WTC11 (cell line): ENCODE measurements at regions of chr19 and their contacts with region 1.

Region 1: DNA sequence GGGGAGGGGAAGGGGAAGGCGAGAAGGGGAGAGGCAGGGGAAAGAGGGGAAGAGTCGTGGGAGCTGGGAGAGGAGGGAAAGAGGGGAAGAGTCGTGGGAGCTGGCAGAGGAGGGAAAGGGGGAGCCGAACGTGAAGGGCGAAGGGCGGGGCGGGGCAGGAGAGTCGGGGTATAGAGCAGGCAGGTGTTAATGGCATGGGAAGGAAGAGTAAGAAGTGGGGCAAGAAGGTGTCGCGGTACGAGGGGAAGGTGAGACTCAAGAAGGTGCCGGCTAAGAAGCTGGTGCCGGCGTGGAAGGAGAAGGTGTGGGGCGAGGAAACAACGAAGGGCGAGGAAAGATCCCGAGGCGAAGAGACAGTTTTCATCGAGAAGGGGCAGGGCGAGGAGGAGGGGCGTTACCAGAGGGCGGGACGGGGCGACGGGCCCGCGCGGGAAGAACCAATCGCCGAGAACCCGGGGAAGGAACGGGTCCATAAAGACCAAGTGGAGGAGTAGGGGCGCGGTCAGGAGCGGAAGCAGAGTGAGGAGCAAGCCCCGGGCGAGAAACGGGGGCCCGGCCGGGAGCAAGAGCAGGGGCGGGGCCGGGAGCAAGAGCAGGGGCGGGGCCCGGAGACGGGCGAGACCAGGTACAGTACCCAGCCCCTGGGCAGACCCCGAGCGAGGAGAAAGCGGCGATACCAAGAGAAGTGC is 463 bp downstream of the CATSPERG start:
- DNase-seq: peak; percentile 93
- ATAC-seq: peak; percentile 71
- H3K4me3 Mint-ChIP-seq: peak overlapping the region; percentile 100
- H3K27ac Mint-ChIP-seq: peak overlapping the region; percentile 100
- H3K4me1 Mint-ChIP-seq: peaks cover 11% of the 10 kb centered on the region
- H3K27me3 Mint-ChIP-seq: peaks cover 3% of the 10 kb centered on the region; the same call in 1 of the 2 replicates
- CTCF ChIP-seq: no peak

Region 2: DNA sequence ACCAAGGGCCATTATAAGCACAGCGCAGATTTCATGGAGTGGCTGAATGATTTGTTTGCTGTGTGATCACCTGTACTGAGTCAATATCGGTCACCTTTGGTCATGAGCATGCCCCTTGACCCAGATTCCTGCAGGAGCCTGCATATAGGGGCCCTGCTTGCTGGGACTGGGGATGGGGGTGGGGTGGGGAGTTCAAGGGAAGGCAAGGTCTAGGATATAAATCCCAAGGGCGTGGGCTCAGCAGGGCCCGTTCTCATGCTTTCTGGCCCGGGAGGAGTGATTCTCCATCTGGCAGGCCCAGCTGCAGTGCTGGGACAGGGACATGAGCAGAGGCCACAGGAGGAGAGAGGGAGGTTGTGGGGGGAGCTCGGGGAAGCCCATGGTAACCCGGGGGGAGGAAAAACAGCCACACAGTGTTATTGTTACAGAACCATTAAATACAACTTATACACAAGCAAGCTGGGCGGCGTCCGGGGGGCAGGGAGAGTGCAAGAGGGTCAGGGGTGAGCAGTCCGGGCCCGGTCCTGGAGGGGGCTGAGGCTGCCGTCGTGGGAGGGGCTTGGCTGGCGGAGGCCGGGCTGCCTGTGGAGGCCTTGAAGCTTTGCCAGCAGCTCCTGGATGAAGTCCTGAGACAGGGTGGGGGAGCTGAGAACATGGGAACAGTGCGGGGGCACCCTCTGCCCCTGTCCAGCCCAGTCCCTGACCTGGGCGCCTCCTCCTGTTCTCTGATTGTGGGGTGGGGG is 85.1 kb before region 1 on chr19:
- CTCF ChIA-PET with region 1: interaction called, 14 read pairs
- POLR2A ChIA-PET with region 1: interaction called, 6 read pairs
- DNase-seq: peak; percentile 38
- ATAC-seq: peak; percentile 45
- H3K4me3 Mint-ChIP-seq: peak overlapping the region; percentile 63
- H3K27ac Mint-ChIP-seq: peak overlapping the region; percentile 75
- H3K4me1 Mint-ChIP-seq: peaks cover 46% of the 10 kb centered on the region
- H3K27me3 Mint-ChIP-seq: peaks cover 8% of the 10 kb centered on the region
- CTCF ChIP-seq: no peak

Region 3: GRCh38 chr19:38277969-38278680 is 58.0 kb before region 1 on chr19:
- CTCF ChIA-PET with region 1: no interaction called
- POLR2A ChIA-PET with region 1: no interaction called
- DNase-seq: no peak
- ATAC-seq: no peak
- H3K4me3 Mint-ChIP-seq: no peak overlapping the region
- H3K27ac Mint-ChIP-seq: peak overlapping the region; percentile 49; the same call in 1 of the 2 replicates
- H3K4me1 Mint-ChIP-seq: peaks cover 10% of the 10 kb centered on the region; the same call in 1 of the 2 replicates
- H3K27me3 Mint-ChIP-seq: no peaks in the 10 kb centered on the region
- CTCF ChIP-seq: no peak

Region 4: DNA sequence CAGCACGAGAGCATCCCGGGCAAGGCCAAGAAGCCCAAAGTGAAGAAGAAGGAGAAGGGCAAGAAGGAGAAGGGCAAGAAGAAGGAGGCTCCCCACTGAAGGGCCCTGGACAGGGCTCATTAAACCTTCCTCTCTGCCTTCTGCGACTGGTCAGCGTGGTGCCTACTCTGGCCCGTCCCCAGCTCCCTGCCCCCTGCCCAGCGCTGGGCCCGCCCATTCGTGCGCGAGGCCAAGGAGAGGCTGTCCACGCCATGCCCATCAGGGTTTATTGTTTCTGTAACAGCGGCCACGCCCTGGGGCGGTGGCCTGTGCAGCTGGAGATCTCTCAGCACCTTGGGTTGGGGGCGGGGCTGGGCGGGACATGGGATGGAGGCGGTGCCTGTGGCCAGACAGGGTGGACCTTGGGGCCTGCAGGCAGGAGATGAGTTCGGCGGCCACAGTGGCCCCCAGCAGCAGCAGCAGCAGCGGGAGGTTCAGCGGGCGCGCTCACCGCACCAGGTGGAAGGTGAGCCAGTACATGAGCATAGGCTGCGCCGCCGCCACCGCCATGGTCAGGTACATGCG is 31.1 kb before region 1 on chr19:
- CTCF ChIA-PET with region 1: interaction called, 11 read pairs
- POLR2A ChIA-PET with region 1: interaction called, 3 read pairs
- DNase-seq: peak; percentile 90
- ATAC-seq: peak; percentile 86
- H3K4me3 Mint-ChIP-seq: peak overlapping the region; percentile 74
- H3K27ac Mint-ChIP-seq: peak overlapping the region; percentile 88
- H3K4me1 Mint-ChIP-seq: peaks cover 16% of the 10 kb centered on the region
- H3K27me3 Mint-ChIP-seq: peaks cover 4% of the 10 kb centered on the region
- CTCF ChIP-seq: no peak

Region 5: DNA sequence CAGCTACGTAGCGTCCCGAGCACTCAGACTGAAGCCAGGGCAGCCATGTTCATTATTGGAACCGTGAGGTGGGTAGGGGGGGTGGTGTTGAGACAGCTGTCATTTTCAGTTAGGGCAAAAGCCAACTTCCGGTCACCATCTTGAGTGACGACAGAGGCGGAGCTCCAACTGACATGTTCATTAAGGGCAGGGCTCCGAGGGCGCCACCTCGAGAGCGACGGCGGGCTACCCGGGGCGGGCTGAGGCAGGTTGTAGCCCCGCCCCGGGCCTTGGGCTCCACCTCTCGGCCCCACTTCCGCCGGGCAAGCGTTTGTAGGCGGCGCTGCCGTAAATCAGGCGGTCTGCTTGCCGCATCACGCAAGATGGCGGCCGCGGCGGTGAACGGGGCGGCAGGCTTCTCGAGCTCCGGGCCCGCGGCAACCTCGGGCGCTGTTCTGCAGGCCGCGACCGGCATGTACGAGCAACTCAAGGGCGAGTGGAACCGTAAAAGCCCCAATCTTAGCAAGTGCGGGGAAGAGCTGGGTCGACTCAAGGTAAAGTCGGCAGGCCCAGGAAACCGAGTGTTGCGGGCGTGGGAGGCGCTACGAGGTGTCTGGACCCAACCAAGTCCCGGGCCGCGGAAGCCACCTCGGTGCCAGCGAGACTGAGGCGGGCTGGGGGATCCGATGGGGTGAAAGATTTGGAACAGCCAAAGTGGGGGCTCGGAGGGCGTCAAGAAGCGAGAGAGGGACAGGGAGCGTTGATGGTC is 38.5 kb after region 1 on chr19 and contains the start of gene PSMD8:
- CTCF ChIA-PET with region 1: interaction called, 24 read pairs
- POLR2A ChIA-PET with region 1: no interaction called
- DNase-seq: peak; percentile 99
- ATAC-seq: peak; percentile 99
- H3K4me3 Mint-ChIP-seq: peak within 1 kb of the TSS; percentile 100
- H3K27ac Mint-ChIP-seq: peak within 1 kb of the TSS; percentile 75
- H3K4me1 Mint-ChIP-seq: peaks cover 14% of the 10 kb centered on the region
- H3K27me3 Mint-ChIP-seq: peaks cover 25% of the 10 kb centered on the region
- CTCF ChIP-seq: no peak
- total RNA-seq, gene PSMD8: 156 to 167 TPM (median 160 TPM) in 3 replicates

Region 6: GRCh38 chr19:38387550-38388348 is 51.7 kb after region 1 on chr19 and contains the start of gene GGN:
- CTCF ChIA-PET with region 1: interaction called, 11 read pairs
- POLR2A ChIA-PET with region 1: interaction called, 3 read pairs
- DNase-seq: peak; percentile 98
- ATAC-seq: peak; percentile 77
- H3K4me3 Mint-ChIP-seq: peak within 1 kb of the TSS; percentile 85
- H3K27ac Mint-ChIP-seq: peak within 1 kb of the TSS; percentile 97
- H3K4me1 Mint-ChIP-seq: peaks cover 28% of the 10 kb centered on the region
- H3K27me3 Mint-ChIP-seq: peaks cover 3% of the 10 kb centered on the region; the same call in 1 of the 2 replicates
- CTCF ChIP-seq: no peak
- total RNA-seq, gene GGN: 2.4 to 3.1 TPM (median 2.7 TPM) in 3 replicates

Region 7: GRCh38 chr19:38569368-38569983 is 233.4 kb after region 1 on chr19:
- CTCF ChIA-PET with region 1: no interaction called
- POLR2A ChIA-PET with region 1: no interaction called
- DNase-seq: no peak
- ATAC-seq: no peak
- H3K4me3 Mint-ChIP-seq: no peak overlapping the region
- H3K27ac Mint-ChIP-seq: no peak overlapping the region
- H3K4me1 Mint-ChIP-seq: no peaks in the 10 kb centered on the region
- H3K27me3 Mint-ChIP-seq: no peaks in the 10 kb centered on the region; the same call in 1 of the 2 replicates
- CTCF ChIP-seq: no peak

Region 8: DNA sequence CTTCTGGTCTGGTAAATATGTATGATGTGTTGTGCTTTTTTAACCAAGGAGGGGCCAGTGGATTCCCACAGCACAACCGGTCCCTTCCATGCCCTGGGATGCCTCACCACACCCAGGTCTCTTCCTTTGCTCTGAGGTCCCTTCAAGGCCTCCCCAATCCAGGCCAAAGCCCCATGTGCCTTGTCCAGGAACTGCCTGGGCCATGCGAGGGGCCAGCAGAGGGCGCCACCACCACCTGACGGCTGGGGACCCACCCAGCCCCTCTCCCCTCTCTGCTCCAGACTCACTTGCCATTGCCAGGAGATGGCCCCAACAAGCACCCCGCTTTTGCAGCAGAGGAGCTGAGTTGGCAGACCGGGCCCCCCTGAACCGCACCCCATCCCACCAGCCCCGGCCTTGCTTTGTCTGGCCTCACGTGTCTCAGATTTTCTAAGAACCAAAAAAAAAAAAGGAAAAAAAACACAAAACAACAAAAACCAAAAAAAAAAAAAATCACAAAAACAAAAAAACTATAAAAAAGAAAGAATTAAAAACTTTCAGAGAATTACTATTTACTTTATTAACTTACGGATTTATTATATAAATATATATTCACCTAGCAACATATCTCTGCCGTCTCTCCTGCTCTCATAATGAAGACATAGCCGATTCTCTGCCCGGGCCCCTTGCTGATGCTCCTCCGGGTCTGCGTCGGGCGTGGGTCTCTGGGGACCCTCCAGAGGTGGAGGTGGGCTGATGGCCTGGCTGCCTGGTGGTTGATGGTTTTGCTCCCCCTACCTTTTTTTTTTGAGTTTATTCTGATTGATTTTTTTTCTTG is 393.8 kb after region 1 on chr19:
- CTCF ChIA-PET with region 1: no interaction called
- POLR2A ChIA-PET with region 1: no interaction called
- DNase-seq: peak; percentile 94
- ATAC-seq: peak; percentile 82
- H3K4me3 Mint-ChIP-seq: no peak overlapping the region
- H3K27ac Mint-ChIP-seq: peak overlapping the region; percentile 94
- H3K4me1 Mint-ChIP-seq: peaks cover 4% of the 10 kb centered on the region
- H3K27me3 Mint-ChIP-seq: no peaks in the 10 kb centered on the region
- CTCF ChIP-seq: peak; percentile 88